Left colon (tissue), 2 donors: ENCODE measurements at regions of chr1 and their contacts with region 1.

Region 1: DNA sequence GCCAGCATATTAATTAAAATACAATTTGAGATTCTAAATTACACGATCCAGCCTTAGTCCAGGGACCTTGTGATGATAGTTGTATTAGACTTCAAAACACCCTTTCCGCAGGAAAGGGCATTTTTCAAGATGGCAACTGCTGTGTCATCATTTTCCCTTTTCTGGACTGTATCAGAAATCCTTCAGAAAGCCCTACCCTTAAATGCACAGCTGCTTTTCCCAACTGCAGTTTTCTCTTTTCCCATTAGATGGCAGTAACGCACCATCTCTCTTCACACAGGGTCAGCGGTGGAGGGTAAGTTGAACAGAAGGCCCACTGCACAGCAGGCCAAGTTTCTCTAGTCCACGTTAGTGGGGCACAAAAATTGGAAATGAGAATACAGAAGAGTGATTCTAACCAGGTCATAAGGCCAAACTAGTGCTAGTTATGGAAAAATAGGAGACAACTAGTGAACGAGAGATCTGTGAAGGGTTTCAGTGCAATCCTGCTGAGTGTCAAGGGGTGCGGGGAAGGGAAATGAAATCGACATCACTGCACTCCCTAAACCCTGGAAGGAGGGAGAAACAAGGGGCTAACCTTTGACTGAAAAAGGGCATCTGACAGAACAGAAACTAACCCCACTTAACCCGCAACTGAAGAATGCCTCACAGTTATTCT is 22.1 kb upstream of the TDRD10 start:
- DNase-seq: no peak
- ATAC-seq: peak; percentile 31

Region 2: DNA sequence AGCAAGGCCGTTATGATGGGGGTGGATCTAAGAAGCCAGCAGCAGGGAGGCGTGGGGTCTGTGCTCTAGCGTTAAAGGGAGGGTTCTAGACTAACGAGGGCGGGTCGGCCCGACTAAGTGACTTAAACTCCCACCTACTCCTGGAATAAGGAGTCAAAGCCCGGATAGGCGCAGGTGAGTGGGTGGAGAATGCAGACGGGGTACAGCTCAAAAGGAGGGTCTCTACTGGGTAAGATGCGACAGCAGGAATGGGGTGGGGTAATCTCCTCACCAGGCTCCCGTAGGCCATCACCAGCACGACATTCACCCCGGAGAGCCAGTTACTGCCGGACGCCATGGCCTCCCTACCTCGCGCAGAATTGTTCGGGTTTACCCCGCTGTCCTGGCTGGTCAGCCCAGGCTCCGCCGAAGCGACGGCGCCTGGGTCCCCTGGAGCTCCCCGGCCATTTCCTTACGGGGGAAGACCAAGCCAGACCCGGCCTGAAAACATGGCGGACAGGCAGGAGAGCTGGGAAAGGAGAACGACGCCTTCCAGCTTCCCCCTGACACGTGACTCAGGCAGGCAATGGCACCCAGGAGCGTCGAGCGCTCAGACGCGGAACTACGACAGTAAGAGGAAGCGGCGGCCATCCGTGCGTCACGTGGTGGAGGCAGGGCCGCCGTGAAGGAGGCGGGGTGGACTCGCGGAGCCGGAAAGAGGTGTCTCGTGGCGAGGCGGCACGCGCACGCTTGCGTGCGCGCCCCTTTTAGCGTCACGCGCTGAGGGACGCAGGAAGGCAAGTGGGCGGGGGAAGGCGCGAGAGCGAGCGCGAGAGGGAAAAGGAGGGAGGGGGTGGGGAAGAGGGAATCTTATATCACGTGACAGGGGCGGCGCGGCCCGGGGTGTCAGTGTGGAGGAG is 259.6 kb before region 1 on chr1 and contains the start of gene UBAP2L:
- intact Hi-C with region 1: no loop called
- DNase-seq: peak; percentile 99
- ATAC-seq: peak; percentile 94
- total RNA-seq, gene UBAP2L: 78.5 to 90.2 TPM

Region 3: GRCh38 chr1:154546264-154547063 is 66.6 kb after region 1 on chr1:
- intact Hi-C with region 1: loop called in 1 of 2 experiments (anchors 10 kb)
- DNase-seq: peak; percentile 42 to 53
- ATAC-seq: peak; percentile 80

Region 4: DNA sequence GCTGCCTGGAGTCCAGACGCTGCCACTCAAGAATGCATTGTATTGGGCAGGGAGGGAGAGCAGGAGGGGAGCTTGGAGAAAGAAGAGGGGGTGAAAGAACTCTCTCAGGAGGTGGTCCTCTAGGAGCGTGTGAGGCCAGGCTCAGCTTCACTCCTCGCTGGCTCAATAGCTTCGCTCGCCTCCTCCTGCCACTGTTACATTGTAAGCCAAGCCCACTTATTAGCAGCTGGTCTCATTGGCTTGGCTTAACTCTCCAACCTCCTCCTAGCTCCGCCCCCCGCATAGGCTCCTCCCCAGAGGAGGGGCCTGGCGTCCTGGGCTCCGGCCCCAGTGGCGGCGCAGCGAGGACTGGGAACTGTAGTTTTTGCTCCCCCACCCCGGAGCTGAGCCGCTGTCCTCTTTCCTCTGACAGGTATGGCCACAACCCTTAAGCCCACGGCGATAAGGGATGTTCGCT is 390.2 kb after region 1 on chr1 and contains the start of gene KCNN3:
- intact Hi-C with region 1: loop called in 1 of 2 experiments (anchors 5 kb)
- DNase-seq: peak; percentile 87 to 91
- ATAC-seq: peak; percentile 100
- total RNA-seq, gene KCNN3: 0.73 to 3.6 TPM

Region 5: GRCh38 chr1:154884869-154885701 is 405.2 kb after region 1 on chr1:
- intact Hi-C with region 1: loop called in 1 of 2 experiments (anchors 5 kb)
- DNase-seq: no peak
- ATAC-seq: peak; percentile 37